ENCODE measurements at regions of chr16 and their contacts with region 1.

Region 1: DNA sequence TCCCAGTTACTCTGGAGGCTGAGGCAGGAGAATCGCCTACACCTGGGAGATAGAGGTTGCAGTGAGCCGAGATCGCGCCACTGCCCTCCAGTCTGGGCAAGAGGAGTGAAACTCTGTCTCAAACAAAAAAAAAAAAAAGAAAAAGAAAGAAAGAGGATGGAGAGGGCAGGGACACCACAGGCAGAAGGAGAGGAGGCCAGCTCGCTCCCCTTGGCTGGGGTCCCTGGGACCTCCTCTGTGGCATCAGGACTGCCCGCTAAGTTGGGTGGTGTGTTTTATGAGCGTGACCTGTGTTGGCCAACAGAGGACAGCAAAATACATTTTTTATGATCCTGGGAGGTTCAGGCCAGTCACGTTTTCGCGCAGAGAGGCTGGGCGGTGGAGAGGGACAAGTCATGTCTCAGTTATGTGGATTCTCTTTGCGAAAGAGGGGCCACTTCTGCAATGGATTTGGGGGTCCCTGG is 229.6 kb downstream of the MRTFB start:
- DNase-seq: peak in 6 of 14 experiments; percentile 15 to 63 (median 50)
- ATAC-seq: peak; percentile 59
- H3K4me3 ChIP-seq: no peak overlapping the region
- H3K4me3 Mint-ChIP-seq: peak overlapping the region; percentile 87
- H3K27ac ChIP-seq: no peak overlapping the region
- H3K27ac Mint-ChIP-seq: peak overlapping the region; percentile 61
- H3K4me1 ChIP-seq: peaks cover 20% of the 10 kb centered on the region
- H3K4me1 Mint-ChIP-seq: peaks cover 16% of the 10 kb centered on the region
- H3K27me3 ChIP-seq: peaks cover 13 to 14% of the 10 kb centered on the region in 2 experiments
- H3K27me3 Mint-ChIP-seq: peaks cover 9% of the 10 kb centered on the region
- CTCF ChIP-seq: peak; percentile 51

Region 2: GRCh38 chr16:14529010-14529669 is 228.4 kb after region 1 on chr16:
- CTCF ChIA-PET with region 1: no interaction called
- POLR2A ChIA-PET with region 1: no interaction called
- intact Hi-C with region 1: loop called (anchors 1 to 2 kb)
- DNase-seq: peak; percentile 24 to 76 (median 42)
- ATAC-seq: peak; percentile 48
- H3K4me3 ChIP-seq: no peak overlapping the region
- H3K4me3 Mint-ChIP-seq: no peak overlapping the region
- H3K27ac ChIP-seq: no peak overlapping the region
- H3K27ac Mint-ChIP-seq: no peak overlapping the region
- H3K4me1 ChIP-seq: peaks cover 2% of the 10 kb centered on the region
- H3K4me1 Mint-ChIP-seq: no peaks in the 10 kb centered on the region
- H3K27me3 ChIP-seq: no peaks in the 10 kb centered on the region
- H3K27me3 Mint-ChIP-seq: no peaks in the 10 kb centered on the region
- CTCF ChIP-seq: peak; percentile 69

Region 3: DNA sequence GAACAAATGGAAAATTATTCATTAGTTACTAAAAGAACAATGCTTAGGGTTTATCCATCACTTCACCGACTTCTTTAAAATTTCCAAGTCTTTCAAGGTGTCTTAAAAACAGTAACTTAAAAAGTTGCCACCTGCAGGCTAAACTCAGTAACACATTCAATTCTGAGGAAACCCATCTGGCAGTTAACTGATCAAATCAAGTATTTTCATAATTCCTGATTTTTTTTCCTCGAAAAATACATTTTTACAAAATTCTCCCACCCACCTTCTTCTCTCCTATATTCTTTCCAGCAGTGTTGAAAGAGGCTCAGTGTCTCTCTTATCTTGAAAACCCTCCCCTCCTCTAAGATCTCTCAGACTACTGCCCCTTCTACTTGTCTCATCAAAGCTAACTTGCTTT is 299.4 kb after region 1 on chr16:
- CTCF ChIA-PET with region 1: no interaction called
- POLR2A ChIA-PET with region 1: no interaction called
- intact Hi-C with region 1: loop called (anchors 2 to 10 kb)
- DNase-seq: peak in 3 of 14 experiments; percentile 14 to 35 (median 31)
- ATAC-seq: no peak
- H3K4me3 ChIP-seq: no peak overlapping the region
- H3K4me3 Mint-ChIP-seq: no peak overlapping the region
- H3K27ac ChIP-seq: no peak overlapping the region
- H3K27ac Mint-ChIP-seq: no peak overlapping the region
- H3K4me1 ChIP-seq: no peaks in the 10 kb centered on the region
- H3K4me1 Mint-ChIP-seq: no peaks in the 10 kb centered on the region
- H3K27me3 ChIP-seq: no peaks in the 10 kb centered on the region
- H3K27me3 Mint-ChIP-seq: no peaks in the 10 kb centered on the region
- CTCF ChIP-seq: peak; percentile 31

Measured in CD4-positive, alpha-beta T cell (primary cell).